HepG2 (cell line): ENCODE measurements at regions of chr11 and their contacts with region 1.

Region 1: DNA sequence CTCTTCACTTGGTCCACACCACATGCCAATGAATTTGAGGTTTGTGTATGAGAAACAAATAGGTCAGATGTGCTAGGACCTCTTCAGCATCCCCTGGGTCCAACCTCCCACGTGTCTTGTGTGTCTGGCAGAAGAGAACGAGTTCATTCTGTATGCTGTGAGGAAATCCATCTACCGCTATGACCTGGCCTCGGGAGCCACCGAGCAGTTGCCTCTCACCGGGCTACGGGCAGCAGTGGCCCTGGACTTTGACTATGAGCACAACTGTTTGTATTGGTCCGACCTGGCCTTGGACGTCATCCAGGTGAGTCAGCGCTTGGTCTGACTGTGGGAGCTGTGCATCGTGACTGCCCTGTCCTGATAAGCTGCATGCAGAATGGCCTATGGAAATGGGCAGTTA is 101.0 kb upstream of the SORL1-AS1 start:
- DNase-seq: peak; percentile 91
- ATAC-seq: peak; percentile 97
- H3K4me3 ChIP-seq: no peak overlapping the region
- H3K27ac ChIP-seq: peak overlapping the region; percentile 55
- H3K4me1 ChIP-seq: peaks cover 32% of the 10 kb centered on the region
- H3K27me3 ChIP-seq: no peaks in the 10 kb centered on the region
- CTCF ChIP-seq: 0 out of 2 replicates have a peak, but pooled peaks have one; percentile 11
- EP300 ChIP-seq: peak; percentile 15 to 66; a peak in 2 of 4 replicates
- POLR2A ChIP-seq: peak in 1 of 2 experiments; percentile 34; a peak in 1 of 4 replicates
- RAD21 ChIP-seq: no peak

Region 2: DNA sequence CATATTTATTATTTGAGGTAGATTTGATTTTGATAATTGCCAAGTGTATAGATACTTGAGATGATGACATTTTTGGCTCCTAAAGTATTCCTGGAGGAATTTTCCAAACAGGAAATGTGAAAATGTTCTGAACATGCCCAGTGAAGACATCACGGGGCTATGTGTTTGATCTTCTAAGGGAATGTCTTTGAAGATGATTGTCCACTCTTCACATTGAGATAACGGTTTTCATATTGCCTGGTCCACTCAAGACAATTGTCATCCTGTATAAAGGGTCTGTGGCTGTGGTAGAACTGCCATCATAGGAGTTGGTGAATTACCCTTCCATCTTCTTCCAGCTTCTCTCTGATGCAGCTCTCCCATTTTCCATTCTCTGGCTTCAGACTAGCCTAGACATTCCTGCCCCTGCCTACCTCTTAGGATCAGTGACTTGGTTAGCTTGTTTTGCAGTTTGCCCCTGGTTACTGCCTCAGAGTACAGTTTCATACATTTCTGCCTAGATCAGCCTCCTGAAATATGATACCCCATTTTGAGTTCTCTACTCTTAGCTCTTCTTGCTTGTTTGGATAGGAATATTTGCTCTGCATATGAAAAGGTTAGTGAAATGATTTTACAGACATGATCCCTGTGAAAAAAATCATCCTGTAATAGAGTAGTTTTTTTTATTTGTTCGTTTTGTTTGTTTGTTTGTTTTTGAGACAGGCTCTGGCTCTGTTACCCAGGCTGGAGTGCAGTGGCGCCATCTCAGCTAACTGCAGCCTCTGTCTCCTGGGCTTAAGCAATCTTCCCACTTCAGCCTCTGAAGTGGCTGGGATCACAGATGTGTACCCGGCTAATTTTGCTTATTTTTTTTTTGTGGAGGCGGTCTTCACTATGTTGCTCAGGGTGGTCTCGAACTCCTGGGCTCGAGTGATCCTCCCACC is 10.4 kb after region 1 on chr11:
- CTCF ChIA-PET with region 1: no interaction called
- POLR2A ChIA-PET with region 1: interaction called, 12 read pairs
- in situ Hi-C with region 1: no loop called
- intact Hi-C with region 1: no loop called
- DNase-seq: peak; percentile 50
- ATAC-seq: peak; percentile 33
- H3K4me3 ChIP-seq: no peak overlapping the region; a peak in 1 of 6 replicates
- H3K27ac ChIP-seq: peak overlapping the region; percentile 94
- H3K4me1 ChIP-seq: peaks cover 90% of the 10 kb centered on the region
- H3K27me3 ChIP-seq: no peaks in the 10 kb centered on the region
- CTCF ChIP-seq: 0 out of 2 replicates have a peak, but pooled peaks have one; percentile 7
- EP300 ChIP-seq: peak in 1 of 2 experiments; percentile 54; a peak in 2 of 4 replicates
- POLR2A ChIP-seq: no peak
- RAD21 ChIP-seq: no peak

Region 3: DNA sequence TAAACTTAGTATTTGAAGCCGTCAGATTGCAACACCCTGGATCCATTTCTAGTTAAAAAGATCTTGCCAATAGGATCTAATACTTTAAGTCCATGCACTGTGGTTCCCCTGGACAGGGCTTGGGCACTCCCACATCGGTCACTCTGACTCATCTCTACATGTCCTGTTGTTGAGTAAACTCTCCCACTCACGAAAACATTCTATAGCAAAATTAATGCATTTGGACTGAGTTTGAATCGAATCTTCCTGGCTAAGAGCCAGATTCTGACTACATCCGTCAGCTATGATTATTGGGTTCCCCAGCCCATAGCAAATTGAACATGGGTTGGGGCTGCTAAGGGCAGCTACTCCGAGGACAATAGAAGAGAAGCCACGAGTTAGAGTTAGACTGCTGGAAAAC is 81.1 kb after region 1 on chr11:
- CTCF ChIA-PET with region 1: no interaction called
- POLR2A ChIA-PET with region 1: no interaction called
- in situ Hi-C with region 1: no loop called
- intact Hi-C with region 1: no loop called
- DNase-seq: no peak
- ATAC-seq: peak; percentile 56; the same call in 1 of the 3 replicates
- H3K4me3 ChIP-seq: no peak overlapping the region
- H3K27ac ChIP-seq: no peak overlapping the region
- H3K4me1 ChIP-seq: no peaks in the 10 kb centered on the region
- H3K27me3 ChIP-seq: no peaks in the 10 kb centered on the region
- CTCF ChIP-seq: no peak
- EP300 ChIP-seq: no peak
- POLR2A ChIP-seq: no peak
- RAD21 ChIP-seq: no peak

Region 4: DNA sequence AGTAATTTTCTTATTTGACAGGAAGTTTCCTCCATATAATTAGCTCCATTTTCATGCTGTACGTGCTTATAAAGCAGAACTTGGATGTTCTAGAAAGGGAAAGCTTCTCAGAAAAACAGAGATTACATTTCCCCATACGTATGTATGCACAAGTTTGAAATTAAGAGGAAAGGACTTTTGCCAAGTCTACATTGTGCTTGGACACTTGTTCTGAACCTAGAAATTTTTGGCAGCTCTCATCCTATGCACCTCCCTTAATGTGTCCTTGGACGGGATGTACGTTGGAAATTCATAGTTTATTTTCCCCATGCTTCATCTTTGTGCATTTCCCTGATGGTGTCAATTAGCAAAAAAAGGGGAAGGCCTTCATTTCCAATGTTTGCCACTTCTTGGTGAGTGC is 239.5 kb after region 1 on chr11:
- CTCF ChIA-PET with region 1: no interaction called
- POLR2A ChIA-PET with region 1: no interaction called
- in situ Hi-C with region 1: no loop called
- intact Hi-C with region 1: loop called (anchors 5 kb)
- DNase-seq: no peak
- ATAC-seq: no peak
- H3K4me3 ChIP-seq: no peak overlapping the region
- H3K27ac ChIP-seq: no peak overlapping the region
- H3K4me1 ChIP-seq: no peaks in the 10 kb centered on the region
- H3K27me3 ChIP-seq: no peaks in the 10 kb centered on the region; a peak in 2 of 5 replicates
- CTCF ChIP-seq: no peak
- EP300 ChIP-seq: no peak
- POLR2A ChIP-seq: no peak
- RAD21 ChIP-seq: no peak